B cell (primary cell): ENCODE measurements at regions of chr4 and their contacts with region 1.

Region 1: DNA sequence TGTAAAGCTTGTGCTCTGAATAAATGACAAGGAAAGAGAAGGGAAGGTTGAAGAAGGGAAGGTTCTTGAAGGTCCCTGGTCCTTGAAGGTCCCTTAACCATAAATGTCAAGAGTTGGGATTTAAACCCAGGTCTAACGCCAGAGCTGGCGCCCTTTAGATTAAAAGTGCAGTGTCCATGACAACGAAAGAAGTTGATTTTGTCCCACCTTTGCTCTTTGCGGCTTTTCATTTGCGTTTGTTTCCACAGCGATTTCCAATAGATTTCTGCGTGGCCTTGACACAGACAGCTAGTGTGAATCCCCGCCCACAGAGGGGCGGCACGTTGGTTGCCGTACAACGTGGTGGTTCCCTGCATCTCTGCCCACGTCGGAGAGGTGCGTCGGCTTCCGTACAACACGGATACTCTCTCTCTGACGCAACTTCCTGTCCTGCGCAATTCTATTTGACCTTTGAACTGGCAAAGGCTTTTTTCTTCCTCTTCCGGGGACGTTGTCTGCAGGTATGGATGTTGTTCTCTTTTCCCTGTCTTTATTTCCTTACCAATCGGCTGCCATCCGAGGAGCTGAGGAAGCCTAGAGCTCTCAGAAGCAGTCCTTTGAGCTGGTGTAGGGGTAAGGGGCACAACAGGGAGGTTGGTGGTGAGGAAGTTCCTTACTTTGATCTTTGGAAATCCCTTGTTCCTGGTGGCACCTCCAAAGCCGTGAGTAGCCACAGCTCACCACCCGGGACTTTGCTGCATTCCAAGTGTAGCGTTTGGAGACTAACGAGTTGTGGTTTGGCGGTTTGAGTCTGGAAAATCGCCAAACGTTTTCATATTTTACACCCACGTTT is at the start of gene RPL34:
- DNase-seq: peak; percentile 98
- ATAC-seq: peak; percentile 100
- H3K4me3 ChIP-seq: peak within 1 kb of the TSS; percentile 86 to 100 (median 98)
- H3K4me3 Mint-ChIP-seq: peak within 1 kb of the TSS; percentile 96
- H3K27ac ChIP-seq: peak within 1 kb of the TSS; percentile 87 to 88
- H3K27ac Mint-ChIP-seq: peak within 1 kb of the TSS; percentile 93
- H3K4me1 ChIP-seq: peaks cover 20 to 24% of the 10 kb centered on the region in 2 donors
- H3K4me1 Mint-ChIP-seq: peaks cover 44% of the 10 kb centered on the region
- H3K27me3 ChIP-seq: no peaks in the 10 kb centered on the region
- H3K27me3 Mint-ChIP-seq: no peaks in the 10 kb centered on the region
- CTCF ChIP-seq: no peak
- total RNA-seq, gene RPL34: 2,198 and 2,267 TPM in 2 replicates

Region 2: GRCh38 chr4:107989537-107990386 is 630.6 kb before region 1 on chr4 and contains the start of gene HADH:
- CTCF ChIA-PET with region 1: no interaction called
- POLR2A ChIA-PET with region 1: no interaction called
- intact Hi-C with region 1: loop called (anchors 1 kb)
- DNase-seq: peak; percentile 95
- ATAC-seq: peak; percentile 98
- H3K4me3 ChIP-seq: peak within 1 kb of the TSS; percentile 65 to 87 (median 71)
- H3K4me3 Mint-ChIP-seq: peak within 1 kb of the TSS; percentile 81
- H3K27ac ChIP-seq: peak within 1 kb of the TSS; percentile 38 to 82
- H3K27ac Mint-ChIP-seq: peak within 1 kb of the TSS; percentile 82
- H3K4me1 ChIP-seq: peaks cover 33 to 46% of the 10 kb centered on the region in 2 donors
- H3K4me1 Mint-ChIP-seq: peaks cover 48% of the 10 kb centered on the region
- H3K27me3 ChIP-seq: no peaks in the 10 kb centered on the region
- H3K27me3 Mint-ChIP-seq: no peaks in the 10 kb centered on the region
- CTCF ChIP-seq: no peak
- total RNA-seq, gene HADH: 26.1 and 26.4 TPM in 2 replicates

Region 3: GRCh38 chr4:108581083-108581482 is 39.2 kb before region 1 on chr4:
- CTCF ChIA-PET with region 1: no interaction called
- POLR2A ChIA-PET with region 1: interaction called, 16 read pairs
- intact Hi-C with region 1: no loop called
- DNase-seq: no peak
- ATAC-seq: no peak
- H3K4me3 ChIP-seq: no peak overlapping the region
- H3K4me3 Mint-ChIP-seq: no peak overlapping the region
- H3K27ac ChIP-seq: no peak overlapping the region
- H3K27ac Mint-ChIP-seq: no peak overlapping the region
- H3K4me1 ChIP-seq: no peaks in the 10 kb centered on the region
- H3K4me1 Mint-ChIP-seq: no peaks in the 10 kb centered on the region
- H3K27me3 ChIP-seq: no peaks in the 10 kb centered on the region
- H3K27me3 Mint-ChIP-seq: no peaks in the 10 kb centered on the region
- CTCF ChIP-seq: no peak

Region 4: DNA sequence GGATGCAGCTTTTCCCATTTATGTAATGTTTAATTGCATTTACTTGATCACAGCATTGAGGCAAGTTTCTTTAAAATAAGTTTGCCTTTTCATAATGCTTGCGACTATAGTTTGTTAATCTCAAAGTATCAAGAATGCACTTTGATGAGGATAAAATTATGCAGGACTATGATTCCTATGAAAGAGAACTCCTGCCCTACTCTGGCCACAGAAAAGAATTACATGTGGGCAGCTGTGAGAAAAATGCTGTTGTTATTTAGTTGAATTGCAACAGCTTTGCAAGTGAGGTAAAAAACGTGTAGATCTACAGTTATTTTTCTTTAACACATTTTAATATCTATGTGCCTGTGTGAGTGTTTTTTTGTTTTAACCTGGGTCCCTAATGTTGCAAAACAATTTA is 17.5 kb after region 1 on chr4:
- CTCF ChIA-PET with region 1: no interaction called
- POLR2A ChIA-PET with region 1: no interaction called
- intact Hi-C with region 1: no loop called
- DNase-seq: no peak
- ATAC-seq: no peak
- H3K4me3 ChIP-seq: no peak overlapping the region
- H3K4me3 Mint-ChIP-seq: no peak overlapping the region
- H3K27ac ChIP-seq: no peak overlapping the region
- H3K27ac Mint-ChIP-seq: no peak overlapping the region
- H3K4me1 ChIP-seq: no peaks in the 10 kb centered on the region
- H3K4me1 Mint-ChIP-seq: no peaks in the 10 kb centered on the region
- H3K27me3 ChIP-seq: no peaks in the 10 kb centered on the region
- H3K27me3 Mint-ChIP-seq: no peaks in the 10 kb centered on the region
- CTCF ChIP-seq: no peak

Region 5: DNA sequence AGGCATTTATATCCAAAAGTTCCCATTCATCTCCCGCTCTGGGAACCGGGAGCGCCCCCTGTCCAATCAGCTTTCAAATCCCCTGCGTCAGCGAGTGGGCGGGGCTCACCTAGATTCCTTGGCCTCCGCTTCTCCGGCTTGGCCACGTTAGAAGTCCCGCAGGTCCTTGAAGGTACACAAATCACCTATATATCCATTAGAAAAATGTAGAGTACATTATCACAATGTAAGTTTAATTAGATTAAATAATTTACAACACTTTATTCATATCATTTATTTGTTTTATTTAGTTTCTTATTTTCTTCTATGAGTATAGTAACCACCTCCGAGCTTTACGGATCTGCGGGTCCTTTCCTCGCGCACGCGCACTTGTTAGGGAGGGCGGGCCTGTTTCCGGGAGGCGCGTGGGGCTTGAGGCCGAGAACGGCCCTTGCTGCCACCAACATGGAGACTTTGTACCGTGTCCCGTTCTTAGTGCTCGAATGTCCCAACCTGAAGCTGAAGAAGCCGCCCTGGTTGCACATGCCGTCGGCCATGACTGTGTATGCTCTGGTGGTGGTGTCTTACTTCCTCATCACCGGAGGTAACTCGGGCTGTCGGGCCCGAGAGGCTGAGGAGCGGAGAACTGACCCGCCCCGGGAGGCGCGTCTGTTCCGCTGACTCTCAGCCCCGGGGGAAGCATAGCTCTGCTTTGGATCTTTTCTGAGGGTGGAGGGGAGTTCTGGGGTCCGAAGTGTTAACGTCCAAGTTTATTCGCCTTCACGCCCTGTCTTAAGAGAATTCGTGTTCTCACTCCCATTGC is 30.1 kb after region 1 on chr4 and contains the start of gene OSTC:
- CTCF ChIA-PET with region 1: interaction called, 7 read pairs
- POLR2A ChIA-PET with region 1: interaction called, 11 read pairs
- intact Hi-C with region 1: loop called (anchors 1 kb)
- DNase-seq: peak; percentile 96
- ATAC-seq: peak; percentile 95
- H3K4me3 ChIP-seq: peak within 1 kb of the TSS; percentile 79 to 96 (median 87)
- H3K4me3 Mint-ChIP-seq: peak within 1 kb of the TSS; percentile 95
- H3K27ac ChIP-seq: peak within 1 kb of the TSS; percentile 77 to 91
- H3K27ac Mint-ChIP-seq: peak within 1 kb of the TSS; percentile 96
- H3K4me1 ChIP-seq: peaks cover 9 to 15% of the 10 kb centered on the region in 2 donors
- H3K4me1 Mint-ChIP-seq: peaks cover 37% of the 10 kb centered on the region
- H3K27me3 ChIP-seq: no peaks in the 10 kb centered on the region
- H3K27me3 Mint-ChIP-seq: no peaks in the 10 kb centered on the region
- CTCF ChIP-seq: no peak
- total RNA-seq, gene OSTC: 38.9 and 39.9 TPM in 2 replicates